Heart right ventricle (tissue), 16 donors: ENCODE measurements at regions of chr3 and their contacts with region 1.

Region 1: DNA sequence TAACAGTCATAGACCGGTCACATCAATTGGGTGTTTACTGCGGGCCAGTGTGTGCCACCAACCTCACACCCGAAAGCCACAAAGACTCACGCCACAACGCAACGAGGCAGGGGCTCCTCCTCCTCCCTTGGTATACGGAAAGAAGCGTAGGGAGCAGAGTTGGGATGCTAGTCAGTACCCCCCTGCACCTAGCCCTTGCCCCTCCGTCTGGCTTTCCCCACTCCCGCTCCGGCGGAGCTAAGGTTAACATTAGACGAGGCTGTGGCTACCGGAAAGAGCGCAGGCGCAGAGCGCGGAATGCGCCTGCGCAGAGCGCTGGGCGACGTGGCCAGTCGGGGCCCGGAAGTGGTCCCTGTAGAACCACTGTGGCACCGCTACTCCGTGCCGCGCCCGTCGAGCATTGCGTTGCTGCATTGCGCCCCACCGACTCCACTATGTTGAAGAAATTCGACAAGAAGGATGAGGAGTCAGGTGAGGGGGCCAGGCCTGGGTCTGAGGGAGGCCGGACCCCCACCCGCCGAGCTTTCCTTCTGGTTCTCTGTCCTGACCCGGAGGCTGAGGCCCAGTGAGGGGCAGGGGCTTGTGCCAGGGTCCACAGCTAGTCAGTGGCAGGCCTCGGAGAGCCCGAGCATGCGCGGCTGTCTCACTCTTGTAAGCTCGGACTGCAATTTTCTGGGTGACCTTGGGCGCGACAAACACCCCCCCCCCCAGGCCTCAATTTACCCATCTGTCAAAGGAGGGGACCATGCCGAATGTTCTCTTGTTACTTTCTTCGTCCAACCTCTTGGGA is at the start of gene COPG1:
- DNase-seq: peak; percentile 83 to 90
- ATAC-seq: peak; percentile 92 to 97 (median 96)
- H3K4me3 ChIP-seq: peak within 1 kb of the TSS; percentile 80 to 100 (median 98)
- H3K27ac ChIP-seq: peak within 1 kb of the TSS; percentile 49 to 99 (median 90)
- H3K4me1 ChIP-seq: peaks cover 8 to 58% (median 44%) of the 10 kb centered on the region in 9 donors
- H3K27me3 ChIP-seq: no peaks in the 10 kb centered on the region
- CTCF ChIP-seq: no peak
- total RNA-seq, gene COPG1: 79.5 to 113 (median 96.1) TPM

Region 2: DNA sequence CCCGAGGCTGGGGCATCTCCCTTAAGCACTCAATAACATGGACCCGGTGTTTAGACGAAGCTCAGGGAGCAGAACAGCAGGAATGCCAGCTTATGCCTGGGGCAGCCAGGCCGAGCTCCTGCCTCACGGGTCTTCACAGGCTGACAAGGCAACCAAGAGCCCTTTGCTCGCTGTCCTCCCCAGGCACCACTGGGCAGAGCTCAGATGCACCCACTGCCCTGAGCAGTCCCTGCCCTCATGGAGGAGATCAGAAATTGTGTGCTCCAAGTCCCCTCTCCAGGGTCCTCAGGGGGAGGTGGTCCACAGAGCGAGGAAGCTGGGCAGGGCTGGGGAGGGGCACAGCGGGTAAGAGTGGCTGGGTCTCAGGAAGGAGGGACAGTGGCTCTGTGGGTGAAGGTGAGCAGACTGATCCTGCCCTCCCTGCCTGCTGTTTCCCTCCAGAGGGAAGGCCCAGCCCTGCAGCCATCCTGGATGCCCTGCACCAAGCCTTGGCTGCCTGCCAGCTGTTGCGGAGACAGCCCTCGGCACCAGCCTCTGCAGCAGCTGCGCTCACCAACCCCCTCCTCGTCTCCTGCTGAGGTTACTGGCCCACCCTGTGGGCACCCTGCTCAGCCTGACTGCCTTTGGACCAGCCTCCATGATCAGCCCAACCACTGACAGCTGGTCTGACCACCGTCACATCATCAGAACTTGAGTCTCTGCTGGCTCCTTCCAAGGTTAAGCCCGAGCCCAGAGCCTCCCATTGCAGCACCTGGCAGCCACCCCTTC is 210.0 kb before region 1 on chr3:
- intact Hi-C with region 1: no loop called
- DNase-seq: no peak
- ATAC-seq: peak in 6 of 8 donors; percentile 25 to 70 (median 46)
- H3K4me3 ChIP-seq: no peak overlapping the region
- H3K27ac ChIP-seq: no peak overlapping the region
- H3K4me1 ChIP-seq: peaks cover 0 to 5% (median 0%) of the 10 kb centered on the region in 9 donors
- H3K27me3 ChIP-seq: peaks cover 0 to 4% (median 0%) of the 10 kb centered on the region in 7 donors
- CTCF ChIP-seq: no peak

Region 3: DNA sequence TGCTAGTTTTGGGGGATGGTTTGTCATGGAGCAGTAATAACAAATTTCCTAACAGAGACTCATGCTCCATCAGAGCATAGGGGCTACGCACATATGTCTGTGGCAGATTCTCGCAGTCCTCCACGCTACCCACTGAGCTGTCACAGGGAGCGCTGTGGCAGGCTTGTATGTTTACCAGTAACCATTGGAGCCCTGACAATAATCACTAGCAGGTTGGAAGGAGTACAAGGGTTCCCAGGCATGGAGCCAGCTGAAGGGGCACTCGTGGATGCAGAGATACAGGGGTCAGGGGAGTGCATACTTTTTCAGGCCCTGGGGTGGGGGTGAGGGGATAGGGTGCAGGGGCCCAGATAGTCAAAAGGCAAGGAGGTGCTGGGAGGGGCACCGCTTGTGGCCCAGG is 196.8 kb before region 1 on chr3:
- intact Hi-C with region 1: loop called in 5 of 10 experiments (anchors 1 to 10 kb)
- DNase-seq: peak; percentile 70 to 83
- ATAC-seq: peak; percentile 74 to 94 (median 88)
- H3K4me3 ChIP-seq: no peak overlapping the region
- H3K27ac ChIP-seq: peak overlapping the region in 9 of 10 donors; percentile 22 to 90 (median 77)
- H3K4me1 ChIP-seq: peaks cover 9 to 27% (median 19%) of the 10 kb centered on the region in 9 donors
- H3K27me3 ChIP-seq: no peaks in the 10 kb centered on the region
- CTCF ChIP-seq: peak in 2 of 9 donors; percentile 22 to 26

Region 4: DNA sequence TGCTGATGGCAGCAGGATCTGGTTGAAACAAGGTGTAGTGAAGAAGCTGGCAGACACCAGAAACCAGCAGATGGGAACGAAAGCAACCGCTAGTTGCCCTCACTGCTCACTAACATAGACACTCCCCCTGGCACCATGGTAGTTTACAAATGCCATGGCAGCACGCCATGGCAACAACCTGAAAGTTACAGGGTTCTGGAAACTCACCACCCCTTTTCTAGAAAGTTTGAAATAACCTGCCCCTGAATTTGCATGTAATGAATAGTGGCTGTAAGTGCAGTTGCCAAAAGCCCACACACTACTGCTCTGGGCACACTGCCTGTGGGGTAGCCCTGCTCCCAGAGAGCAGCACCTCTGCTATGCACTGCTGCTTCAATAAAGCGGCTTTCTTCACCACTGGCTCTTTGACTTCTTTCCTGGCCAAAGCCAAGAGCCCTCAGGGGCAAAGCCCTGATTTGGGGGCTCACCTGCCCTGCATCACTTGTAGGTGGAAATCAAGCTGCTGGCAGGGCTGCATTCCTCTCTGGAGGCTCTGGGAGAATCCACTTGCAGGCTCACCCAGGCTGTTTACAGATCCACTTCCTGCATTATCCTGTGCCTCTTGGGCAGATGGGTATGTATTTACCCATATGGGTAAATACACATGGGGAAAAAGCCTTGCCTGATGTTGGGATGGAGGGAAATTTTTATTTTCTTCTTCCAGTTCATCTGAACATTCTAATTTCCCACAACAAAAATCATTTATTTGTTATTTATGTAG is 190.8 kb before region 1 on chr3:
- intact Hi-C with region 1: loop called in 5 of 10 experiments (anchors 1 to 10 kb)
- DNase-seq: no peak
- ATAC-seq: peak in 1 of 8 donors; percentile 28
- H3K4me3 ChIP-seq: no peak overlapping the region
- H3K27ac ChIP-seq: no peak overlapping the region
- H3K4me1 ChIP-seq: peaks cover 0 to 30% (median 5%) of the 10 kb centered on the region in 9 donors
- H3K27me3 ChIP-seq: no peaks in the 10 kb centered on the region
- CTCF ChIP-seq: peak in 1 of 9 donors; percentile 5

Region 5: DNA sequence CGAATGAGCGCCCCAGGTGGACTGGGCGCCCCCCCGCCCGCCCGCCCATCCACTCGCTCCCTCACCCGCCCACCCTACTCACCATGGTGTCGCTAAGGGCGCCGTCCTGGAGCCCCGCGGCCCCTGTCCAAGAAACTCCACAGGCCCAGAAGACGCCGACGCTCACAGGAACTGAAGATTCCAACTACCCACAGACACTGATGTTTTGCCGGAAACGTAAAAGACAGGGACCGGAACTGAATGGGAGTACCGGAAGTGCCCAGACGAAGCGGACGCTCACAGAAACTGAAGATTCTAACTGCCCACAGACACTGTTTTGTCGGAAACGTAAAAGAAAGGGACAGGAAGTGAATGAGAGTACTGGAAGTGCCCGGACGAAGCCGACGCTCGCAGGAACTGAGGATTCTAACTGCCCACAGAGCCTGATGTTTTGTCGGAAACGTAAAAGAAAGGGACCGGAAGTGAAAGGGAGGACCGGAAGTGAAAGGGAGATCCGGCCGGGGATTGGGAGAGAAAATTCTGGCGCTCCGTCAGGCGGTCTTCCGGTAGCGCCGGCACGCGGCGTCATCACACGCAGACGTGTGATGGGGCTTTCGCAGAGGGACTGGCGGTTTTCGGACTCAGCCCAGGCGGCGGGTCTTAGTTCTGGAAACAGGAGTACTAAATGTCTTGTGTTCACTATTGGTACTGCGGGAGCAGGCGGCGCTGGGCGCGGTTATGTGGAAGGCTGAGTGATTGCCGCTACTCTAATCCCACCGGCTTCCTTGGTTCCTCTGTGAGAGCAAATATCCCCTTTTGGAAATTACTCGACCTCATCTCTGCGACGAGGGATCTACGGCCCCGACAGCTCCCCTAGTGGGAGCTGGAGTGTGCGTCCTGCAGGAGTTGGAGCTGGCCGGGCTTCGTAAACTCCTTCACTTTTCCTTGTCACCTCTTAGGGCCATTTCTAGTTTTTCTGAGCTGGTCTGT is 88.3 kb before region 1 on chr3 and contains the start of gene ISY1:
- intact Hi-C with region 1: loop called in 2 of 10 experiments (anchors 1 kb)
- DNase-seq: peak; percentile 87 to 94
- ATAC-seq: peak; percentile 91 to 98 (median 95)
- H3K4me3 ChIP-seq: peak within 1 kb of the TSS; percentile 68 to 95 (median 78)
- H3K27ac ChIP-seq: peak within 1 kb of the TSS; percentile 72 to 99 (median 92)
- H3K4me1 ChIP-seq: peaks cover 8 to 33% (median 21%) of the 10 kb centered on the region in 9 donors
- H3K27me3 ChIP-seq: no peaks in the 10 kb centered on the region
- CTCF ChIP-seq: peak; percentile 44 to 83 (median 75)
- total RNA-seq, gene ISY1: 26.7 to 35.4 (median 29.7) TPM

Region 6: GRCh38 chr3:129176051-129176450 is 73.4 kb before region 1 on chr3:
- intact Hi-C with region 1: loop called in 8 of 10 experiments (anchors 5 to 10 kb)
- DNase-seq: no peak
- ATAC-seq: peak in 5 of 8 donors; percentile 14 to 54 (median 23)
- H3K4me3 ChIP-seq: no peak overlapping the region
- H3K27ac ChIP-seq: peak overlapping the region in 5 of 10 donors; percentile 9 to 100 (median 19)
- H3K4me1 ChIP-seq: peaks cover 31 to 98% (median 91%) of the 10 kb centered on the region in 9 donors
- H3K27me3 ChIP-seq: no peaks in the 10 kb centered on the region
- CTCF ChIP-seq: no peak

Region 7: GRCh38 chr3:129183569-129184395 is 65.7 kb before region 1 on chr3 and contains the start of gene CNBP:
- intact Hi-C with region 1: loop called in 8 of 10 experiments (anchors 5 to 10 kb)
- DNase-seq: peak; percentile 94
- ATAC-seq: peak; percentile 98 to 99 (median 99)
- H3K4me3 ChIP-seq: peak within 1 kb of the TSS; percentile 75 to 97 (median 92)
- H3K27ac ChIP-seq: peak within 1 kb of the TSS; percentile 94 to 100 (median 99)
- H3K4me1 ChIP-seq: peaks cover 7 to 68% (median 52%) of the 10 kb centered on the region in 9 donors
- H3K27me3 ChIP-seq: no peaks in the 10 kb centered on the region
- CTCF ChIP-seq: peak in 1 of 9 donors; percentile 8
- total RNA-seq, gene CNBP: 438 to 594 (median 487) TPM